GM10248 (cell line): ENCODE measurements at regions of chr19 and their contacts with region 1.

Region 1: DNA sequence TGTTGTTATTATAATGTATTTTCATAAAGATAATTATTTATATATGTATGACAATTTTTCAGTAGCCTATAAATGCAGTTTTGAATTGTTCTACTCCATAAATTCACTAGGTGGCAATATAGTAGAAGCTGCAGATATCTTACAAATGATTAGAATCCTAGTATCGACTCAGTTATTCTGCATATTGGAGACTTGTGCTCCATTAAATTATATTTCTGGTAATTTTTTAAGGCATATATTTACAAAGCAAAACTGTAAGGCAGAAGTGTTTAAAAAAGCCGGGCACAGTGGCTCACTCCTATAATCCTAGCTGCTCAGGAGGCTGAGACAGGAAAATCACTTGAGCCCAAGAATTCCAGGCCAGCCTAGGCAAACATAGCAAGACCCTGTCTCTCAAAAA is 58.7 kb downstream of the DPY19L3 start:
- DNase-seq: no peak
- CTCF ChIP-seq: no peak

Region 2: DNA sequence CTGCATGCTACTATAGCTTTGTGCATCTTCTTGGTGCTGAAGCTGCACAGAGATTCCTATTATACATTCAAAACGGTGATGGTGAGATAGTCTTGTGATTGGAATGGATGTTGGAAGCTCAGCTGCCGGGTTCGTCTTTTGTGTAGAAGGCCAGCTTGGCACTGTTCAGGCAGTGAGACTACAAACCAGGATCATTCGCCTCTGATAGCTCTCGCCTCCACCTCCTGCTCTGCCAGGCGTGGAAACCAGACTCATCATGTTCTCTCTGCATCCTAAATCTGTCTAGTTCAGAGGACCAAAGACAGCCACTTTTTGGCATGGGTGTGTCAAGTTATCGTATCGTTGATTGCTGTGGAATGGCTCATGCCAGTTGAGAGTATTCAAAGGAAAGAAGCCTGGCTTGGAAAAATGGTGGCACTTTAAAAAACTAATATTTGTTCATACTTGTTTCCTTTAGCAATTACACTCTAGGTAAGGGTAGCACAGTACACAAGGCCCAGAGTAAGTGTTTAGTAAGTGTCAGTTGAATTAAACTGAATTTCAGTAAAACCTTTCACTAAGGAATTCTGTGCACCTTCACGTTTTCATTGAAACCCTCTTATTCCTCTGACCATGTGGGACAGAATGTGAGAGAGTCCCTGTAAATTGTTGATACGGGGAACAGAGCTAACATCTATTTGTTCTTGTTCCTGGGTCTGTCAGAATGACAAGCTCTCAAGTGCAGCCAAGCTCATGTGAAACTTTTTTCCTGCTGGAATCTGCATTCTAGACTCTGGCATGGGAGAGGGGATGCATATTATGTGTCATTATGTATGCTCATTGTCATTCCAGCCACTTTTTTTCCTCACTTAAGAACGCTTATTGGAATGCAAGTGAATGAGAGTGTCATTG is 11.1 kb after region 1 on chr19:
- CTCF ChIA-PET with region 1: interaction called, 18 read pairs
- POLR2A ChIA-PET with region 1: no interaction called
- DNase-seq: no peak
- CTCF ChIP-seq: no peak